ENCODE measurements at regions of chr2 and their contacts with region 1.

Region 1: GRCh38 chr2:226869371-226869770 is 33.5 kb downstream of the RHBDD1 start:
- DNase-seq: peak; percentile 36
- ATAC-seq: peak; percentile 86
- H3K4me3 ChIP-seq: no peak overlapping the region
- H3K27ac ChIP-seq: no peak overlapping the region
- H3K4me1 ChIP-seq: 0 out of 2 replicates have a peak, but pooled peaks cover 7% of the 10 kb centered on the region
- H3K27me3 ChIP-seq: no peaks in the 10 kb centered on the region
- CTCF ChIP-seq: no peak

Region 2: GRCh38 chr2:226561962-226562361 is 307.4 kb before region 1 on chr2:
- CTCF ChIA-PET with region 1: no interaction called
- POLR2A ChIA-PET with region 1: no interaction called
- intact Hi-C with region 1: no loop called
- DNase-seq: peak; percentile 67
- ATAC-seq: peak; percentile 56; the same call in 1 of the 2 replicates
- H3K4me3 ChIP-seq: no peak overlapping the region
- H3K27ac ChIP-seq: no peak overlapping the region
- H3K4me1 ChIP-seq: peaks cover 26% of the 10 kb centered on the region
- H3K27me3 ChIP-seq: no peaks in the 10 kb centered on the region
- CTCF ChIP-seq: no peak

Region 3: DNA sequence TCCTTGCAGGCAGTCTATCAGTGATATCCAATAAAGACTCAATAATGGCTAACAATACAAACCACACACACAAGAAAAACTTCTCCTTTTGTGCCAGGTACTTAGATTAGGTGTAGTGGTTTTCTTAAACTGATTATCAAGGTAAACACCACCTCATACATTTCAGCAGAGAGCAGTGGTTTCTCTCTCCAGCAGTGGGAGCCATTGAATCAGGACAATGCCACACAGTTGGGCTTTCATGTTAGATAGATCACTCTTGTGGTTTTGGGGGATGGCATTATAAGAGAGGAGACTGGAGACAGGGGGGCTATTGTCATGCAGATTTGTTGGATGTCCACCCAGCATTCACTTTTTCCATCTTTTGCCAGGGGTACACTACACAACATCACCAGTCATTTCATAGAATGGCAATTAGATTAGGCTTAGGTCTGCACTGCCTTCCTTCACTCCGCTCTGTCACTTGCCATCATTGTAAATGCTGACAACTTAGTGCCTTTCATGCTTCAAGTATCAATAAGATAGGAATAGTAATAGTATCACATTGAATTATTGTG is 56.1 kb before region 1 on chr2:
- CTCF ChIA-PET with region 1: no interaction called
- POLR2A ChIA-PET with region 1: no interaction called
- intact Hi-C with region 1: no loop called
- DNase-seq: peak; percentile 55
- ATAC-seq: peak; percentile 81
- H3K4me3 ChIP-seq: no peak overlapping the region
- H3K27ac ChIP-seq: no peak overlapping the region
- H3K4me1 ChIP-seq: no peaks in the 10 kb centered on the region
- H3K27me3 ChIP-seq: no peaks in the 10 kb centered on the region
- CTCF ChIP-seq: peak; percentile 75

Region 4: DNA sequence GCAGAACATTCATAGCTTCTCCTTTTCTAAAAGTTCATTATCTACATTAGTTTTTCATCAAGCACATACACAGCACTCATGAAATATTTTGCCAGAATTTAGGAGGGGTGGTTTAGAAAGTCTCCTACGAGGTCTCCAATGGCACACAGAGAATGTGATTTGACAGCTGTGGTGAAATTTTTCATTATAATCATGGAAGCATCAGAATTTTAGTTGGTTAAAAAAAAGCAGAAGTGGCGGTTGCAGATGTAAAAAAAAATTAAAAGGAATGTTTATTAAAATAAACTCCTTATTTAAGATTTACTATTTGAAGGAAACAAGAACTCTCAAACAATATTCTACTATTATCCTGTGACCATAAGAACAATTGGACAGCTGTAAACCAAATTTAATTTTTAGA is 44.3 kb before region 1 on chr2:
- CTCF ChIA-PET with region 1: no interaction called
- POLR2A ChIA-PET with region 1: no interaction called
- intact Hi-C with region 1: no loop called
- DNase-seq: no peak
- ATAC-seq: no peak
- H3K4me3 ChIP-seq: no peak overlapping the region
- H3K27ac ChIP-seq: no peak overlapping the region
- H3K4me1 ChIP-seq: no peaks in the 10 kb centered on the region
- H3K27me3 ChIP-seq: no peaks in the 10 kb centered on the region
- CTCF ChIP-seq: no peak

Region 5: GRCh38 chr2:226911932-226912331 is 42.6 kb after region 1 on chr2:
- CTCF ChIA-PET with region 1: no interaction called
- POLR2A ChIA-PET with region 1: no interaction called
- intact Hi-C with region 1: loop called (anchors 2 kb)
- DNase-seq: peak; percentile 78
- ATAC-seq: peak; percentile 97
- H3K4me3 ChIP-seq: no peak overlapping the region
- H3K27ac ChIP-seq: no peak overlapping the region
- H3K4me1 ChIP-seq: peaks cover 8% of the 10 kb centered on the region; the same call in 1 of the 2 replicates
- H3K27me3 ChIP-seq: no peaks in the 10 kb centered on the region
- CTCF ChIP-seq: no peak

Region 6: GRCh38 chr2:226977775-226978190 is 108.4 kb after region 1 on chr2:
- CTCF ChIA-PET with region 1: no interaction called
- POLR2A ChIA-PET with region 1: no interaction called
- intact Hi-C with region 1: loop called (anchors 2 kb)
- DNase-seq: peak; percentile 77
- ATAC-seq: peak; percentile 97
- H3K4me3 ChIP-seq: no peak overlapping the region
- H3K27ac ChIP-seq: peak overlapping the region; percentile 34
- H3K4me1 ChIP-seq: peaks cover 16% of the 10 kb centered on the region
- H3K27me3 ChIP-seq: no peaks in the 10 kb centered on the region
- CTCF ChIP-seq: no peak

Measured in PC-3 (cell line).